ENCODE measurements at regions of chr3 and their contacts with region 1.

Region 1: DNA sequence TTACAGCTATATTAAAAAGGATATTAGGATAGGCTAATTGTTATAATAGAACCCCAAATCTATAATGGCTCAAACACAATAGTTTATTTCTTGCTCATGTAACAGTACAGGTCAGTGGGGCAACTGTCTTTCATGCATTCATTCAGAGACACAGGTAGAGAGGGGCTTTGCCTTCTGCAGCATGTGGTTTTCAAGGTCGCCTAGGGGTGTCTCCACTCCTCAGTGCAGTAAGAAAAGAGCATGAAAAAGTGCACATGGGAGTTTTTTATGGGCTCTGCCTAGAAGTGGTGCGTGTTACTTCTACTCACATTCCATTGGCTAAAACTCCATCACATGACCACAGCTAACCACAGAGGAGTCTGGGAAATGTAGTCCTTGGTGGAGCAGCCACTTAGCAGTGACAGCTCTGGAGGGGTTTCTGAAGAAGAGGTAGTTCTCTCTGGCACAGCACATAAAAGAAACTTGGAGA is 1.8 kb downstream of the ZBTB38 start:
- DNase-seq: peak; percentile 79
- H3K4me3 Mint-ChIP-seq: peak overlapping the region; percentile 80
- H3K27ac Mint-ChIP-seq: peak overlapping the region; percentile 97
- H3K4me1 Mint-ChIP-seq: peaks cover 69% of the 10 kb centered on the region
- H3K27me3 Mint-ChIP-seq: no peaks in the 10 kb centered on the region
- CTCF ChIP-seq: peak; percentile 18

Region 2: GRCh38 chr3:140842984-140843649 is 527.0 kb before region 1 on chr3:
- CTCF ChIA-PET with region 1: no interaction called
- intact Hi-C with region 1: no loop called
- DNase-seq: no peak
- H3K4me3 Mint-ChIP-seq: no peak overlapping the region
- H3K27ac Mint-ChIP-seq: no peak overlapping the region
- H3K4me1 Mint-ChIP-seq: no peaks in the 10 kb centered on the region
- H3K27me3 Mint-ChIP-seq: peaks cover 65% of the 10 kb centered on the region
- CTCF ChIP-seq: no peak

Region 3: DNA sequence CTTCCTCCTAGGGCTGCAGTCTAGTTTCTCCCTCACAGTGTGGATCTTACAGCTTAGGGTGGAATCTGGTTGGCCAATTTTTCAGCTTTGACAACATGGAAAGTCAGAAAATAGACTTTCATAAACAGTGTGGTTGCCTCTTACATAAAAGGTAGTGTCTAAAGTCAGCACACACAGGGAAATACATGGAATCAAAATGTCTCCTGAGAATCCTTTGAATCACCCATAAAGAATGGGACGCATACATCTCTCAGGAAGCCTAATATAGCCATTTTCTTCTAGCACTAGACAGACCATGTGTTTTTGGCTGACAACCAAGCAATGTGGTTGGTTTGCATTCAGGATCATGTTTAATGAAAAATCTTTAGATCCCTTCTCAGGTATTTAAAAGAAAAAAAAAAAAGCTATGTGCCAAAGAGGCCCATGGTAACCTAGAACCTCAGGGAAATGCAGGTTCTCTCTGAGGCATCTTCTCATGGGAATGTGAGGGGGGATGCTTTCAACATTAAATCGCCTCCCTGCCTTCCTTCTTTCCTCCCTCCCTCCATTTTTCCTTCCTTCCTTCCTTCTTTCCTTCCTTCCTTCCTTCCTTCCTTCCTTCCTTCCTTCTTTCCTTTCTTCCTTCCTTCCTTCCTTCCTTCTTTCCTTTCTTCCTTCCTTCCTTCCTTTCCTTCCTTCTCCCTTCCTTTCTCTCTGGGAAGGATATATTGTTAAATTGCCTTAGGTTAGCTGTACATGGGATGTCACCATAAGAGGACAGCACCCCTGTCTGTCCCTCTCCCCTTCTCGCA is 36.1 kb before region 1 on chr3:
- CTCF ChIA-PET with region 1: interaction called, 12 read pairs
- intact Hi-C with region 1: no loop called
- DNase-seq: no peak
- H3K4me3 Mint-ChIP-seq: no peak overlapping the region
- H3K27ac Mint-ChIP-seq: no peak overlapping the region
- H3K4me1 Mint-ChIP-seq: peaks cover 18% of the 10 kb centered on the region
- H3K27me3 Mint-ChIP-seq: no peaks in the 10 kb centered on the region
- CTCF ChIP-seq: no peak

Region 4: DNA sequence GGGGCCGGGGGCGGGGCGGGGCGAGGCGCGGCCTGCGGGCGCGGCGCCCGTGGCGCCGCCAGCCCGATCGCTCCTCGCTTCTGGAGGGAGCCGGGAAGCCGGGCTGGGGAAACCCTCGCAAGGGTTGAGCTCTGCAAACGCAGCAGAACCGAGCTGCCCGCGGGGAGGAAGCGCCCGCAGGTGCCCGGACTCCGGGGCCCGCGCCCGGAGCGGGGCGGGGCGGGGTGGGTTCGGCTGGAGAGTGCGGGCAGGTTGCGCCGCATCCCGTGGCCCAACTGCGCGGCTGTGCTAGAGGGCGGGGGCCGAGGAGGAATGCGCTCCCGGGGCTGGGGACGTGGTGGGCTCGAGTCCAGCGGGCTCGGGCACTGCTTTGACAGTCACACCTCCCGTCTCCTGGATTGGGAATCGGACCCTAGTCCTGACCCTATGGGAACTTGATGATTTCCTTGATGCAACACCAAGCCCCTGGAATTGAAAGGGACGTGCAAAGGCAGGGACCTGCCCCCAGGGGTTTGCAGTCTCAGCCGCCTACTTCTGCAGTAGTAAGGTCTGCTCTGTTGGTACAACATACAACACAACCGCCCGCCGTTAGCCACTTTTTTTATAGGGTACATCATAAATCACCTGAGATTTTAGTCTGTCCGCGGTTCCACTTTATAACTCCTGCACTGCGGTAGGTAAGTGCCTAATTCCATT is 32.5 kb after region 1 on chr3:
- CTCF ChIA-PET with region 1: interaction called, 7 read pairs
- intact Hi-C with region 1: loop called (anchors 2 kb)
- DNase-seq: peak; percentile 67
- H3K4me3 Mint-ChIP-seq: peak overlapping the region; percentile 49
- H3K27ac Mint-ChIP-seq: no peak overlapping the region
- H3K4me1 Mint-ChIP-seq: no peaks in the 10 kb centered on the region
- H3K27me3 Mint-ChIP-seq: no peaks in the 10 kb centered on the region
- CTCF ChIP-seq: no peak

Region 5: DNA sequence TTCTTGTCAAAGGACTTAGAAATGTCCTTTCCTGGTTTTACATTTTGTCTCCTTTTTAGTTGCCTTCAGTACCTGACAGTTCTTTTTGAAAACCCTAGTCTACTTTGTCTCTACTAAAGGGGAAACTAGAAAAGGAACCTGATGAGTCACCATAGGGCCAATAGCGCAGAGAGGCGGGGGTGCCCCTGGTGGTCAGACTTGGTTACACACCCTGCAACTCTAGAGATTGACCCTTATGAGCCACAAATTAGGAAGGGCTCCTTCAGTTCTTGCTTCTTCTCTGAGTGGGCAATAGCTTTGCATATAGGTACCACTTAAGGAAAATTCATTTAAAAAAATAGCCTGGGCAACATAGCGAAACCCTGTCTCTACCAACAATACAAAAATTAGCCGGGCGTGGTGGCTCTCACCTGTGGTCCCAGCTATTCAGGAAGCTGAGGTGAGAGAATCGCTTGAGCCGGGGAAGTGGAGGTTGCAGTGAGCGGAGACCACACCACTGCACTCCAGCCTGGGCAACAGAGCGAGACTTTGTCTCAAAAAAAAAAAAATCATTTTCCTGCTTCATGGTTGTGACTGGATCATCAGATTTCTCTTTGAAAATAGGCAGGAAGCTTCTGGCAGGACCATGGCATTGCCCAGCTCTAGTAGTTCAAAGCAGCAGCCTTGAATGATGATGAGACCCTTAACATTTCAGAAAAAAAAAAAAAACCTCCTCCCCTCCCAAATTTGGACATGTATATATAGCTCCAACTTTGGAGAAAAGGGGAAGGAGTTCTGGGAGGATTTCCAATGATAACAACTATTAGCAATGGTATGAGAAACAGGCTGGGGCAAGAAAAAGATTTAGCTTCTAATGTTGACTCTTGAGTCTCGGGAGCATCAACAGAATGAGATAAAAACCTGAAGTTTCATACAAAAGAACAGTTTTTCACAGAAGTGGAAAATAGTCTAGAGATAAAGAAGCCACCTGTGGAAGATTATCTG is 71.6 kb after region 1 on chr3:
- CTCF ChIA-PET with region 1: interaction called, 5 read pairs
- intact Hi-C with region 1: loop called (anchors 2 kb)
- DNase-seq: peak; percentile 94
- H3K4me3 Mint-ChIP-seq: no peak overlapping the region
- H3K27ac Mint-ChIP-seq: peak overlapping the region; percentile 52
- H3K4me1 Mint-ChIP-seq: peaks cover 36% of the 10 kb centered on the region
- H3K27me3 Mint-ChIP-seq: no peaks in the 10 kb centered on the region
- CTCF ChIP-seq: peak; percentile 98